ENCODE measurements at regions of chr15 and their contacts with region 1.

Region 1: DNA sequence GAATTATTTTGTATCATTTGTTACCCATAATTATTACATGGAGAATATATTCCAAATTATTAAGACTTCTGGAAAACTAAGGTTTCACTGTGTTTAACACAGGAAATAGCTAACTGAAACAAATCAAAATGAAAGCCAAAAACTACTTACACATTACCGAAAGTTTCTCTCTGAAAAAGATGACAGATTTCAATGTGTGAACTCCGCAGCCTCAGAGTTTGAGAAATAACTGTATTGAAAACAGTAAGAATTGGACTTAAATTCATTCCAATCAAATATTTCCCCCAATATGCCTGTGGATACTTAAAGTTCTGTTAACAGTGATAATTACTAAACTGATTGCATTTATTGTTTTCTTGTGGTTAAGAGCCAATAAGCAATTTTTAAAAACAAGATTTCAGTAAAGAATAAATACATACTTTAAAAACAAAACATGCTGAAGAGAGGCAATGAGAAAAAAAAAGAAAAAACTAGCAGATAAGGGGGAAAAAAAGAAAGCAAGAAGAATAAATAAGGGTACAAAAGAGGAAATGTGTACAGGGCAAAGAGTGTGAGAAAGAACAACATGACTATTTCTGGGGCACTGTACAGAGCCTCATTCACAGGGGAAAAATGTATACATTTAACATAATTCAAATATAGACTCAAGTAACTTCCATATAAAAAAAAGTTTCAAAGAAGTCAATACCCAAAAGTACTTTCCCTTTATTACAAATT is 30.7 kb downstream of the DENND4A start:
- DNase-seq: no peak
- H3K4me3 Mint-ChIP-seq: peak overlapping the region; percentile 57
- H3K27ac Mint-ChIP-seq: peak overlapping the region; percentile 85
- H3K4me1 Mint-ChIP-seq: peaks cover 31% of the 10 kb centered on the region
- H3K27me3 Mint-ChIP-seq: no peaks in the 10 kb centered on the region

Region 2: DNA sequence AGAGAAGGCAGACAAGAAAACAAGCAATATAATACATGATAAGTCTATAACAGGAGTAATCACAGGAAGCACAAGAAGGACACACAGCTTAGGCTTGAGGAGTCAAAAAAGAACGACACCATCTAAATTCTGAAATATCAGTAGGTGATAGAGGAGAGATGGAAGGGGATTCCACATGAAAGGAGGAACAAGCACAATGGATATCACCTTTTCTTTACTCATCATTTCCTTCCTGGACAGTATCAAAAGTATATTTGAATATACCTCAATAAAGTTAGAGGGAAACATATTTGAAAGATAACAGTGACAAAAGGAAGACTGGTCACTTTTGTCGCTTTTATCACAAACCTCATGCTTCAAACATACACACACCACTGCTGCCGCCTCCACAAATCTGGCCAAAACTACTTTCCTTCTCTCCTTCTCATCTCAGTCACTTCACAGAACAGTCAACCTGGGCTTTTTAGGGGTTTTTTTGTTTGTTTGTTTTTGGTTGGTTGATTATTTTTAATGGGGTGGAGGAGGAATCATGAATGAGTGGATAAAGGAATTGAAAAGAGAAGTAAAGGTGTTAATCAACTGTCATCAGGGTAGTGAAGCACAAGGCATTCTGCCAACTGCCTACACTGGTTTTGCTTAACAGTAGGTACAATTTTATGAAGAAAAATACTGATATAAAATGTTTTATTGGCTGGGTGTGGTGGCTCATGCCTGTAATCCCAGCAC is 12.2 kb after region 1 on chr15:
- intact Hi-C with region 1: loop called (anchors 1 kb)
- DNase-seq: no peak
- H3K4me3 Mint-ChIP-seq: peak overlapping the region; percentile 15
- H3K27ac Mint-ChIP-seq: peak overlapping the region; percentile 74
- H3K4me1 Mint-ChIP-seq: peaks cover 40% of the 10 kb centered on the region
- H3K27me3 Mint-ChIP-seq: no peaks in the 10 kb centered on the region

Region 3: DNA sequence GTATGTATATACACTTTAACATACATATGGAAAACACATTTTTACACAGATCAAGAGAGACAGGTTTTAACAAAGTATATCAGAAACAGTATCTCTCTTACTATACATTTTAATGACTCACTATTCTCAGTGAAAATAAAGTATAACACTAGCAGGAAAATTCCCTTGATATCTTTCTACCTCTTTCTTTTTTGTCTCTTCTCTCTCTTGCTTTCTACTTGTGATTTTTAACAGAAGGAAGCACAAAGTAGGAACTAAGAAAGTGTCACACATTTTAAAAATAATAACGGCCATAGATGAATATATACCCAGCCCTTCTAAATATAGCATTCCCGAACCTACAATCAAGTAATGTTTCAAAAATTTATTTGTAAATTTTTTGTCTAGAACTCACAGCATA is 25.9 kb after region 1 on chr15:
- intact Hi-C with region 1: loop called (anchors 1 kb)
- DNase-seq: no peak
- H3K4me3 Mint-ChIP-seq: peak overlapping the region; percentile 47
- H3K27ac Mint-ChIP-seq: peak overlapping the region; percentile 77
- H3K4me1 Mint-ChIP-seq: peaks cover 41% of the 10 kb centered on the region
- H3K27me3 Mint-ChIP-seq: no peaks in the 10 kb centered on the region

Region 4: GRCh38 chr15:65832549-65833364 is 71.4 kb after region 1 on chr15:
- intact Hi-C with region 1: loop called (anchors 2 kb)
- DNase-seq: peak; percentile 50
- H3K4me3 Mint-ChIP-seq: peak overlapping the region; percentile 77
- H3K27ac Mint-ChIP-seq: peak overlapping the region; percentile 96
- H3K4me1 Mint-ChIP-seq: peaks cover 54% of the 10 kb centered on the region
- H3K27me3 Mint-ChIP-seq: no peaks in the 10 kb centered on the region

Region 5: GRCh38 chr15:66039117-66039871 is 277.9 kb after region 1 on chr15:
- intact Hi-C with region 1: no loop called
- DNase-seq: no peak
- H3K4me3 Mint-ChIP-seq: no peak overlapping the region
- H3K27ac Mint-ChIP-seq: no peak overlapping the region
- H3K4me1 Mint-ChIP-seq: no peaks in the 10 kb centered on the region
- H3K27me3 Mint-ChIP-seq: peaks cover 36% of the 10 kb centered on the region

Measured in activated T-helper 1 cell treated with anti-CD3 and anti-CD28 coated beads, Interleukin-12 subunit alpha, Interleukin-12 subunit beta, Interleukin-2, Interleukin-4 antibody, amounts not matched to agents 30 ng/mL and 10 ng/mL and 1 ng/mL, durations not matched to agents 14 hours and 24 hours and 36 hours (primary cell).